ENCODE measurements at regions of chr17 and their contacts with region 1.

Region 1: GRCh38 chr17:50841949-50842354 is 6.6 kb downstream of the WFIKKN2 start:
- DNase-seq: peak; percentile 81
- H3K4me3 ChIP-seq: no peak overlapping the region
- H3K27ac ChIP-seq: no peak overlapping the region
- H3K4me1 ChIP-seq: no peaks in the 10 kb centered on the region
- H3K27me3 ChIP-seq: no peaks in the 10 kb centered on the region
- CTCF ChIP-seq: peak; percentile 86

Region 2: GRCh38 chr17:50626037-50626574 is 215.8 kb before region 1 on chr17:
- CTCF ChIA-PET with region 1: interaction called, 14 read pairs
- POLR2A ChIA-PET with region 1: no interaction called
- intact Hi-C with region 1: no loop called
- DNase-seq: peak; percentile 81
- H3K4me3 ChIP-seq: no peak overlapping the region
- H3K27ac ChIP-seq: no peak overlapping the region
- H3K4me1 ChIP-seq: peaks cover 22% of the 10 kb centered on the region
- H3K27me3 ChIP-seq: no peaks in the 10 kb centered on the region
- CTCF ChIP-seq: peak; percentile 76

Region 3: GRCh38 chr17:50783193-50783660 is 58.7 kb before region 1 on chr17:
- CTCF ChIA-PET with region 1: interaction called, 22 read pairs
- POLR2A ChIA-PET with region 1: no interaction called
- intact Hi-C with region 1: loop called (anchors 1 kb)
- DNase-seq: peak; percentile 90
- H3K4me3 ChIP-seq: no peak overlapping the region
- H3K27ac ChIP-seq: no peak overlapping the region
- H3K4me1 ChIP-seq: no peaks in the 10 kb centered on the region
- H3K27me3 ChIP-seq: no peaks in the 10 kb centered on the region
- CTCF ChIP-seq: peak; percentile 99